ENCODE measurements at regions of chr11 and their contacts with region 1.

Region 1: GRCh38 chr11:128522055-128522942 is 65.1 kb downstream of the ETS1 start:
- DNase-seq: peak; percentile 73 to 95 (median 90)
- ATAC-seq: peak; percentile 47
- H3K4me3 ChIP-seq: peak overlapping the region; percentile 89
- H3K4me3 Mint-ChIP-seq: peak overlapping the region; percentile 93
- H3K27ac ChIP-seq: peak overlapping the region; percentile 83 to 96
- H3K27ac Mint-ChIP-seq: peak overlapping the region; percentile 99
- H3K4me1 ChIP-seq: peaks cover 41% of the 10 kb centered on the region
- H3K4me1 Mint-ChIP-seq: peaks cover 47% of the 10 kb centered on the region
- H3K27me3 ChIP-seq: no peaks in the 10 kb centered on the region
- H3K27me3 Mint-ChIP-seq: no peaks in the 10 kb centered on the region
- CTCF ChIP-seq: no peak

Region 2: GRCh38 chr11:128302425-128303186 is 219.7 kb before region 1 on chr11:
- CTCF ChIA-PET with region 1: interaction called, 7 read pairs
- POLR2A ChIA-PET with region 1: interaction called, 11 read pairs
- intact Hi-C with region 1: no loop called
- DNase-seq: peak; percentile 49 to 97 (median 65)
- ATAC-seq: peak; percentile 85
- H3K4me3 ChIP-seq: peak overlapping the region; percentile 65
- H3K4me3 Mint-ChIP-seq: peak overlapping the region; percentile 94
- H3K27ac ChIP-seq: peak overlapping the region; percentile 90 to 94
- H3K27ac Mint-ChIP-seq: peak overlapping the region; percentile 100
- H3K4me1 ChIP-seq: peaks cover 82% of the 10 kb centered on the region
- H3K4me1 Mint-ChIP-seq: peaks cover 98% of the 10 kb centered on the region
- H3K27me3 ChIP-seq: no peaks in the 10 kb centered on the region
- H3K27me3 Mint-ChIP-seq: no peaks in the 10 kb centered on the region
- CTCF ChIP-seq: peak; percentile 46

Region 3: GRCh38 chr11:128463371-128463829 is 58.9 kb before region 1 on chr11:
- CTCF ChIA-PET with region 1: no interaction called
- POLR2A ChIA-PET with region 1: interaction called, 13 read pairs
- intact Hi-C with region 1: no loop called
- DNase-seq: peak in 2 of 14 experiments; percentile 3 to 17
- ATAC-seq: no peak
- H3K4me3 ChIP-seq: no peak overlapping the region
- H3K4me3 Mint-ChIP-seq: peak overlapping the region; percentile 82
- H3K27ac ChIP-seq: peak overlapping the region; percentile 92 to 94
- H3K27ac Mint-ChIP-seq: peak overlapping the region; percentile 99
- H3K4me1 ChIP-seq: peaks cover 73% of the 10 kb centered on the region
- H3K4me1 Mint-ChIP-seq: peaks cover 96% of the 10 kb centered on the region
- H3K27me3 ChIP-seq: no peaks in the 10 kb centered on the region
- H3K27me3 Mint-ChIP-seq: no peaks in the 10 kb centered on the region
- CTCF ChIP-seq: no peak

Region 4: GRCh38 chr11:128488471-128488870 is 33.8 kb before region 1 on chr11:
- CTCF ChIA-PET with region 1: interaction called, 3 read pairs
- POLR2A ChIA-PET with region 1: interaction called, 611 read pairs
- intact Hi-C with region 1: loop called in 1 of 2 experiments (anchors 2 kb)
- DNase-seq: peak in 3 of 14 experiments; percentile 28 to 57 (median 40)
- ATAC-seq: peak; percentile 57
- H3K4me3 ChIP-seq: peak overlapping the region; percentile 13
- H3K4me3 Mint-ChIP-seq: peak overlapping the region; percentile 74
- H3K27ac ChIP-seq: peak overlapping the region; percentile 52 to 94
- H3K27ac Mint-ChIP-seq: peak overlapping the region; percentile 99
- H3K4me1 ChIP-seq: peaks cover 96% of the 10 kb centered on the region
- H3K4me1 Mint-ChIP-seq: peaks cover 98% of the 10 kb centered on the region
- H3K27me3 ChIP-seq: no peaks in the 10 kb centered on the region
- H3K27me3 Mint-ChIP-seq: no peaks in the 10 kb centered on the region
- CTCF ChIP-seq: no peak

Region 5: DNA sequence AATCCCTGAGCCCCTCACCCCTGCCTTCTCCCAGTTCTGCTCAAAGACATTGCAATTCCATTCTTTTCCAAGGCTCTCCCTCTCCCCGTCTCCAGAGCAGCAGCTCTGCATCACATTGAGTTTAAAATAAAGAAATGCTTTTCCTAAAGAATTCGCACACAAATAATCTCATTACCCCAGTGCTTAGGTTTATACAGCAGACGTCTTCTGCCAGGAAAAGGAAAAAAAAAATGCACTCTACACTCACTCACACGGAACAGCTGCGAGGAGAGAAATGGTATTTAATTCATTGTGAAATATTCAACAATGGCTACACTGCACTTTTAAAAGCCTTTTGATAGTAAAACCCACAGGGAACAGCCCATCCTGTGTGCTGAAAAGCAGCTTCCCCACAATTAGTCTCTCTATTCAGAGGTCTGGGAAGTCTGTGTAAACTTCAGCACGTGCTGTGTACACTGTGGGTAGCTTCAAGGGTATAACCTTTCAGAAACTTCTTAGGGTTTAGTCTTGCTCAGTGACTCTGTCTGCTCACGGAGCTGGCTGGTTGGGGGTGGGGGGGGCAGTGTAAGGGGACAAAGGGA is 22.3 kb after region 1 on chr11:
- CTCF ChIA-PET with region 1: interaction called, 8 read pairs
- POLR2A ChIA-PET with region 1: interaction called, 102 read pairs
- intact Hi-C with region 1: loop called in 1 of 2 experiments (anchors 2 kb)
- DNase-seq: peak in 5 of 14 experiments; percentile 24 to 69 (median 39)
- ATAC-seq: peak; percentile 61
- H3K4me3 ChIP-seq: peak overlapping the region; percentile 4
- H3K4me3 Mint-ChIP-seq: peak overlapping the region; percentile 74
- H3K27ac ChIP-seq: no peak overlapping the region
- H3K27ac Mint-ChIP-seq: peak overlapping the region; percentile 94
- H3K4me1 ChIP-seq: peaks cover 31% of the 10 kb centered on the region
- H3K4me1 Mint-ChIP-seq: peaks cover 71% of the 10 kb centered on the region
- H3K27me3 ChIP-seq: no peaks in the 10 kb centered on the region
- H3K27me3 Mint-ChIP-seq: no peaks in the 10 kb centered on the region
- CTCF ChIP-seq: no peak

Region 6: DNA sequence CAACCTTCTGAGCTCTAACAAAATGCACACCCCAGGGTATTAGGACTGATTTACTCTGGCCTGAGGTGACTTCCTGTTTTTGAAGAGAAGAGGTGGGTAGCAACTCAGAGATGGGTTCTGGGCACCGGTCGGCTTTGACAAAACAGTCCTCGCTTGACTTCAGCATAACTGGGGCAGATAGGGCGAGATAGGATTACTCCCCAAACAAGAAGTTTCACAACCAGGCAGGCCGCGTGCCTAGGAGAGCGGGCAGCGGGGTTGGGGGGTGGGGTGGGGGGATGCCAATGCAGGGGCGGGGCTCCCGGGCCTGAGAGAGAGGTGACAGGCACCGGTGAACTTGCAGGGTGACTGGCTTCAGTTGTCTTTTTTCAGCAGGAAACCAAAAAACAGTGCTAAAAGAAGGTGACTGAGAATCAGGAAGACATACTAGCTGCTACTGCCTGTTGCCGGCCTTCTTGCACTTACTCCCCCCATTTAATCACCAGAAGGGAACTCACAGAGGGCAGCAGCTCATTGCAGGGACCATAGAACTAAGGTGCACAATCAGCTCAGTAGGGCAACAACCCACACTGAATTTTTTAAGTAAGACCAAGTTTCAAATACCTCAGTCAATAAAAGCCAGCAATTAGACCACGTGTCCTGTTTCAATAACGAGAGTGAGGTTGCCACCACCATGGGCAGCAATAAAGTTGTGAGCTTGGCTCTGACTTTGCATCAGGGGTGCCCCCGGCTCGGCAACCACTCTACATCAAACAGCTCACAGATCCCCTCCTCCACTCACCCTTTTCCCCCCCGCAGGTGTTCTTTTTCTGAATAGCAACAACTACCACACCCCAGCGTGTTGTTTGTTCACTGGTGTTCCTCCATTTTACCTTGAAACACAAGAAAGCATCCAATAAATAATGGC is 102.2 kb after region 1 on chr11:
- CTCF ChIA-PET with region 1: interaction called, 6 read pairs
- POLR2A ChIA-PET with region 1: interaction called, 131 read pairs
- intact Hi-C with region 1: loop called in 1 of 2 experiments (anchors 2 kb)
- DNase-seq: peak; percentile 38 to 89 (median 68)
- ATAC-seq: peak; percentile 69
- H3K4me3 ChIP-seq: peak overlapping the region; percentile 4
- H3K4me3 Mint-ChIP-seq: peak overlapping the region; percentile 80
- H3K27ac ChIP-seq: peak overlapping the region; percentile 78
- H3K27ac Mint-ChIP-seq: peak overlapping the region; percentile 97
- H3K4me1 ChIP-seq: peaks cover 88% of the 10 kb centered on the region
- H3K4me1 Mint-ChIP-seq: peaks cover 98% of the 10 kb centered on the region
- H3K27me3 ChIP-seq: no peaks in the 10 kb centered on the region
- H3K27me3 Mint-ChIP-seq: no peaks in the 10 kb centered on the region
- CTCF ChIP-seq: no peak

Region 7: DNA sequence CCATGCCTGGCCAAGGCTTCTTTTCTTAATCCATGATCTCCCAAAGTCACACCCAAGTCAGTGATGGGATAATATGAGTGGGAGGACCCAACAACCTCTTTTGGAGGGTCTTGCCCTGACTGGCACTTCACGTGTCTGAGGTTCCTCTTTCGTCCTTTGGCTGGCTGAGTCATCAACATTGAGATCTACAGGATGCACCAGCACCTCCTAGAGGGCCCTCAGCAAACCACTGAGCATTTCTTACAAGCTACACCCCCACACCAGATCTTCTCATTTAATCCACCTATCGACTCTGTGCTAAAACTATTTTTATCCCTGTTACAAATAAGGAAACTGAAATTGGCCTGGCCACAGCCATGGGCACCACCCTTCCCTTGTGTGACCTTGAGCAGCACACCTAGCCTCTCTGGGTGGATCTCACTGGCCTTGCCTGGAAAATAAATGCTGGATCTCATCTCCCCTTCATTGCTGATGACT is 235.0 kb after region 1 on chr11:
- CTCF ChIA-PET with region 1: interaction called, 5 read pairs
- POLR2A ChIA-PET with region 1: interaction called, 4 read pairs
- intact Hi-C with region 1: loop called (anchors 2 to 10 kb)
- DNase-seq: peak; percentile 40 to 90 (median 60)
- ATAC-seq: peak; percentile 99
- H3K4me3 ChIP-seq: no peak overlapping the region
- H3K4me3 Mint-ChIP-seq: peak overlapping the region; percentile 7
- H3K27ac ChIP-seq: no peak overlapping the region
- H3K27ac Mint-ChIP-seq: peak overlapping the region; percentile 63
- H3K4me1 ChIP-seq: peaks cover 80% of the 10 kb centered on the region
- H3K4me1 Mint-ChIP-seq: peaks cover 93% of the 10 kb centered on the region
- H3K27me3 ChIP-seq: no peaks in the 10 kb centered on the region
- H3K27me3 Mint-ChIP-seq: no peaks in the 10 kb centered on the region
- CTCF ChIP-seq: peak; percentile 74

Region 8: GRCh38 chr11:128790196-128790595 is 267.9 kb after region 1 on chr11:
- CTCF ChIA-PET with region 1: no interaction called
- POLR2A ChIA-PET with region 1: no interaction called
- intact Hi-C with region 1: no loop called
- DNase-seq: no peak
- ATAC-seq: no peak
- H3K4me3 ChIP-seq: no peak overlapping the region
- H3K4me3 Mint-ChIP-seq: no peak overlapping the region
- H3K27ac ChIP-seq: no peak overlapping the region
- H3K27ac Mint-ChIP-seq: peak overlapping the region; percentile 39
- H3K4me1 ChIP-seq: no peaks in the 10 kb centered on the region
- H3K4me1 Mint-ChIP-seq: peaks cover 47% of the 10 kb centered on the region
- H3K27me3 ChIP-seq: no peaks in the 10 kb centered on the region
- H3K27me3 Mint-ChIP-seq: no peaks in the 10 kb centered on the region
- CTCF ChIP-seq: no peak

Measured in CD4-positive, alpha-beta T cell (primary cell).